T-cell (primary cell): ENCODE measurements at regions of chr2 and their contacts with region 1.

Region 1: DNA sequence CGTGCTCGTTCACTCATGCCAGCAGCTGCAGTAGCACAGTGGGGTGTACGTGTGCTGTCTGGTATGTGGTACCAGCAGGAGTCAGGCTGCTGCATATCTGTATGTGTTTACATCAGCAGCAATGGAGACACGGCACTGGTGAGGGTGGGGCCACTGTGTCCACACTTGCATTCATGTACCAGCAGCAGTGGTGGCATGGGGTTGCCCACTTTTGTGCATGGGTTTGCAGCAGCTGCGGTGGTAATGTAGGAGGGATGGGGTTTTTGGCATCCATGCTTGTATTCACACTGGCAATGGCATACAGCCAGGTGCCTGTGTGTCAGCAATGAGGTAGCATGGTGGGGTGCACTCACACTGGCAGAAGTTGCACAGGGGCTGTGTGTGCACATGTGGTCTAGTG is 187.8 kb downstream of the KCNJ3 start:
- DNase-seq: no peak
- ATAC-seq: no peak
- H3K4me3 ChIP-seq: no peak overlapping the region
- H3K4me3 Mint-ChIP-seq: no peak overlapping the region
- H3K27ac ChIP-seq: no peak overlapping the region
- H3K27ac Mint-ChIP-seq: no peak overlapping the region
- H3K4me1 ChIP-seq: no peaks in the 10 kb centered on the region
- H3K4me1 Mint-ChIP-seq: no peaks in the 10 kb centered on the region
- H3K27me3 ChIP-seq: no peaks in the 10 kb centered on the region
- H3K27me3 Mint-ChIP-seq: no peaks in the 10 kb centered on the region

Region 2: GRCh38 chr2:155010925-155011324 is 124.6 kb after region 1 on chr2:
- CTCF ChIA-PET with region 1: interaction called in 1 of 2 experiments, 10 read pairs
- POLR2A ChIA-PET with region 1: no interaction called
- DNase-seq: no peak
- ATAC-seq: no peak
- H3K4me3 ChIP-seq: no peak overlapping the region
- H3K4me3 Mint-ChIP-seq: no peak overlapping the region
- H3K27ac ChIP-seq: no peak overlapping the region
- H3K27ac Mint-ChIP-seq: no peak overlapping the region
- H3K4me1 ChIP-seq: no peaks in the 10 kb centered on the region
- H3K4me1 Mint-ChIP-seq: no peaks in the 10 kb centered on the region
- H3K27me3 ChIP-seq: no peaks in the 10 kb centered on the region
- H3K27me3 Mint-ChIP-seq: no peaks in the 10 kb centered on the region

Region 3: GRCh38 chr2:155043677-155044076 is 157.4 kb after region 1 on chr2:
- CTCF ChIA-PET with region 1: no interaction called
- POLR2A ChIA-PET with region 1: no interaction called
- DNase-seq: no peak
- ATAC-seq: no peak
- H3K4me3 ChIP-seq: no peak overlapping the region
- H3K4me3 Mint-ChIP-seq: no peak overlapping the region
- H3K27ac ChIP-seq: no peak overlapping the region
- H3K27ac Mint-ChIP-seq: no peak overlapping the region
- H3K4me1 ChIP-seq: no peaks in the 10 kb centered on the region
- H3K4me1 Mint-ChIP-seq: no peaks in the 10 kb centered on the region
- H3K27me3 ChIP-seq: no peaks in the 10 kb centered on the region
- H3K27me3 Mint-ChIP-seq: no peaks in the 10 kb centered on the region